Sigmoid colon (tissue), 7 donors: ENCODE measurements at regions of chr3 and their contacts with region 1.

Region 1: DNA sequence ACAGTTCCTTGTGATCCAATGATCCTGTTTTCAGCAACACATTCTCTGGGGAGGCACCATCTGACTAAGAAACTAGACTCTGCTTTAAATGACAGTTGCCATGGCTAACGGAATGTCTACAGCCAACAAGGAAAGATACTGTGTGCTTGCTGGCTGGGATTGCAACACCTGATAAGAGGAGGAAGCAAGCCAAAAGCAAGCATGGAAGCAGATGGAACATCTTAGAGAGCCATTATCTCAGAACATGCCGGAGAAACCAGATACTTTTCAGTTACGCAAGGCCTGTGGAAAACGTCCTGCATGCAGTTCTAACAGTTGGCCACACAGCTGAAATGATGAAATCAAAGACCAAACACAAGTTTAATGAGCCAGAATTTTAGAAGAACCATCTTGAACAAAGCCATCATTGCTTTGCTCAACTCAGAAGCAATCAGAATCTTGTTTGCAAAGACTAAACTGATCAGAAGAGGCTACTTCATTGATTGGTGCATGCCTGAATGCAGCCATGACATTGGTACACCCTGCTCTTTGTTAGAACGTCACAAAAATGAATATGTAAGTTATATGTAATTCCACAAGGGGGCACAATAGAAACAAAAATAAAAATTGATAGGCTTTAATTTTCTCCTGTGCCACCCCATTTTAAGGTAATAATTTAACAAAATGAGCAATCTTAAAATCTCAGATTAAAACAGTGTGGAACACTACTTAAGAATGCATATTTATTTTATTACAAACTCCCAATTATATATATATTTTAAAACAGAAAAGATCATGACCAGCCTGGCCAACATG is 50.8 kb downstream of the GXYLT2 start:
- DNase-seq: peak; percentile 86
- H3K4me3 ChIP-seq: no peak overlapping the region
- H3K27ac ChIP-seq: peak overlapping the region; percentile 21 to 52 (median 44)
- H3K4me1 ChIP-seq: peaks cover 0 to 13% (median 4%) of the 10 kb centered on the region in 4 donors
- H3K27me3 ChIP-seq: no peaks in the 10 kb centered on the region
- CTCF ChIP-seq: peak; percentile 60 to 88 (median 87)
- EP300 ChIP-seq: no peak
- POLR2A ChIP-seq: no peak

Region 2: DNA sequence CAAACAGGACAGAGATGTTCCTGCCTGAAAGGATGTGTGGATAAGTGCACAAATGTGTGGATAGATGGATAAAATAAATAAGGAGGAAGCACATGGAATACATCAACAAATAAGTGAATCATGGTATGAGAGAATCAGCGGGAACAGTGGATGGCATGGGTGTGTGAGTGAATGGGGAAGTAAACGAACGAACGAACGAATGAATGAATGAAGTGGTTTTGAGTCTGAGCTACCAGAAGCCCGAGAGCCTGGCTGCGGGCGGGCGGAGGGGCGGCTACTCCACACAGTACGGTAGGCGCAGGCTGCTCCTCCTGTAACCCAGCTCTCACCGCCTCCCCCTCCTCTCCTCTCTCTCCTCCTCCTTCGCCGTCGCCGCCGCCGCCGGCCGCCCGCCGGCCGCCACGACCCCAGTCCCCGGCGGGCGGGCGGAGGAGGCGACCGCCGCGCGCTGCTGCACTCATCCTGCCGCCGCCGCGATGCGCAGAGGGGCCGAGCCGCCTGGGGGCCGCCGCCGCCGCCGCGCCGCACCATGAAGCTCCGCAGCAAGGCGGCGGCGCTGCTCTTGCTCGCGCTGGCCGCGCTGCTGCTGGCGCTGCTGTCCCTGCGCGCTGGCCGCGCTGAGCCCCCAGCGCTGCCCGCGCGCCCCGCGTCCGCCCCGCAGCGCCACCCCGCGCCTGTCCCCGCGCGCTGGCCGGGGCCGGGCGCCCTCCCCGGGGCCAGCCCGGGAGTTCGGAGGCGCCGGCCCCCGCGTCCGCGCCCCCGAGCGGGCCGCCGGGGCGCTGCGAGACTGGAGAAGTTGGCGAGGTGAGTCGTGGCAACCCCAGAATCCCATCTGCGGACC is 50.7 kb before region 1 on chr3 and contains the start of gene GXYLT2:
- intact Hi-C with region 1: loop called (anchors 5 kb)
- DNase-seq: peak; percentile 83
- H3K4me3 ChIP-seq: peak within 1 kb of the TSS; percentile 37 to 55 (median 50)
- H3K27ac ChIP-seq: peak within 1 kb of the TSS; percentile 63 to 70 (median 68)
- H3K4me1 ChIP-seq: peaks cover 0 to 24% (median 17%) of the 10 kb centered on the region in 4 donors
- H3K27me3 ChIP-seq: no peaks in the 10 kb centered on the region
- CTCF ChIP-seq: no peak
- EP300 ChIP-seq: no peak
- POLR2A ChIP-seq: no peak
- total RNA-seq, gene GXYLT2: 3.1 to 17.4 (median 7.3) TPM

Region 3: DNA sequence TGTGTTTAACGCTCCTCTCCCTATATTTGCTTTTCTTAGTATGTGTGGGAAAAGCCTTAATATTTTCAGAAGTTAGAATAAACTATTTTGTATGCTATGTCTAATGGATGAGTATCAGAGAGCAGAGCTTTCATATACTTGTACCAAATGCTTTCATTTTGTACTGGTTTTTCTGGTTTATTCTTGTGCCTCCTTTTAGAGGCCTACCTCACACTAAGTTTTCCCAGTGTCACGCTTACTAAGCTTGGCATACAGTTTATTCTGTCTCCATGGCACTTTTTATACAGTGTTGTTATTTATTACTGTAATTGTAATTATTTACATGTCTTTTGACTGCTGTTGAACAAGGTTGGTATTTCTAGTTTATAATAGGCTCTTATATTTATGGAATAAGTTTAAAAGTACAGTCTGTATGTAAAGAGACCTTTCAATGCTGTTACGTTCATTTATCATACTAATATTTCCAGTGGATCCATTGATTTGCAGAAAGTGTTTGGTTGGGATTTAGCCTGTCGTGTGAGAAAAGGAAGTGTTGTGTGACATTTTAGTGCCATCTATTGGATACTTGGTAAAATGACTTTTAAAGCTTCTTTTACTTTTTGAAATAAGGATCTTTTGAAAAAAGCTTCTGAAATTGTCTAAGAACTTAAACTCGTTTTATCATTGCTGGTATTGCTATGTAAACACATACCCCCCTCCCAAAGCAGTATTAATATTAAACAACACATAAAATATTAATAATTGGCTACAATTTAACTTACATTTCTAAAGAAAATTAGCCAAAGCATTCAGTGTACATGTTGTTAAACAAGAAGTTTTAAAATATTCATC is 117.6 kb after region 1 on chr3:
- intact Hi-C with region 1: loop called (anchors 1 kb)
- DNase-seq: no peak
- H3K4me3 ChIP-seq: no peak overlapping the region
- H3K27ac ChIP-seq: peak overlapping the region in 1 of 4 donors; percentile 21
- H3K4me1 ChIP-seq: peaks cover 0 to 35% (median 18%) of the 10 kb centered on the region in 4 donors
- H3K27me3 ChIP-seq: no peaks in the 10 kb centered on the region
- CTCF ChIP-seq: peak; percentile 22 to 52 (median 42)
- EP300 ChIP-seq: no peak
- POLR2A ChIP-seq: no peak

Region 4: DNA sequence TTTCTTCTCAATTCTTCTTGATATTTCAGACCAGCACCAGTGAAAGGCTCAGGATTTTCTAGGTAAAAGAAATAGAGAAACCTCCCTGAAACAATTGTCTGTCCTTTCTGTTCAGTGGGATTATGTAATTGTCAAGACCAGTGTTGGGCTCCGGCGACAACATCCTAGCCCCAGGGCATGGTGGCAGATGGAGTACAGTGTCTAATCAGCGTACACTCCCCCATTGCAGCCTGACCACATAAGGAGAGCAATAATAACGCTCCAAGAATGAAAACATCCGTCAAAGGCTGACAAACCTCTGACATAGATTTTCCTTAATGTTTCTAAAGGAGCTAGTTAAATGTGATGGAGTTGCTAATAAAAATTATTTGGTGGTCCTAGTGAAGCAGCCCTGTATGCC is 267.4 kb after region 1 on chr3:
- intact Hi-C with region 1: no loop called
- DNase-seq: no peak
- H3K4me3 ChIP-seq: no peak overlapping the region
- H3K27ac ChIP-seq: no peak overlapping the region
- H3K4me1 ChIP-seq: no peaks in the 10 kb centered on the region
- H3K27me3 ChIP-seq: no peaks in the 10 kb centered on the region
- CTCF ChIP-seq: no peak
- EP300 ChIP-seq: no peak
- POLR2A ChIP-seq: no peak

Region 5: GRCh38 chr3:73697020-73697419 is 758.4 kb after region 1 on chr3:
- intact Hi-C with region 1: no loop called
- DNase-seq: no peak
- H3K4me3 ChIP-seq: no peak overlapping the region
- H3K27ac ChIP-seq: no peak overlapping the region
- H3K4me1 ChIP-seq: peaks cover 0 to 7% (median 0%) of the 10 kb centered on the region in 4 donors
- H3K27me3 ChIP-seq: no peaks in the 10 kb centered on the region
- CTCF ChIP-seq: no peak
- EP300 ChIP-seq: no peak
- POLR2A ChIP-seq: no peak